Activated CD4-positive, alpha-beta T cell treated with anti-CD3 and anti-CD28 coated beads for 36 hours (primary cell): ENCODE measurements at regions of chr11 and their contacts with region 1.

Region 1: GRCh38 chr11:57335343-57336110 is at the start of gene SSRP1:
- DNase-seq: peak; percentile 93
- ATAC-seq: peak; percentile 99
- H3K4me3 Mint-ChIP-seq: peak within 1 kb of the TSS; percentile 97
- H3K27ac Mint-ChIP-seq: peak within 1 kb of the TSS; percentile 100
- H3K4me1 Mint-ChIP-seq: peaks cover 43% of the 10 kb centered on the region
- H3K27me3 Mint-ChIP-seq: no peaks in the 10 kb centered on the region
- total RNA-seq, gene SSRP1: 279 to 296 TPM

Region 2: DNA sequence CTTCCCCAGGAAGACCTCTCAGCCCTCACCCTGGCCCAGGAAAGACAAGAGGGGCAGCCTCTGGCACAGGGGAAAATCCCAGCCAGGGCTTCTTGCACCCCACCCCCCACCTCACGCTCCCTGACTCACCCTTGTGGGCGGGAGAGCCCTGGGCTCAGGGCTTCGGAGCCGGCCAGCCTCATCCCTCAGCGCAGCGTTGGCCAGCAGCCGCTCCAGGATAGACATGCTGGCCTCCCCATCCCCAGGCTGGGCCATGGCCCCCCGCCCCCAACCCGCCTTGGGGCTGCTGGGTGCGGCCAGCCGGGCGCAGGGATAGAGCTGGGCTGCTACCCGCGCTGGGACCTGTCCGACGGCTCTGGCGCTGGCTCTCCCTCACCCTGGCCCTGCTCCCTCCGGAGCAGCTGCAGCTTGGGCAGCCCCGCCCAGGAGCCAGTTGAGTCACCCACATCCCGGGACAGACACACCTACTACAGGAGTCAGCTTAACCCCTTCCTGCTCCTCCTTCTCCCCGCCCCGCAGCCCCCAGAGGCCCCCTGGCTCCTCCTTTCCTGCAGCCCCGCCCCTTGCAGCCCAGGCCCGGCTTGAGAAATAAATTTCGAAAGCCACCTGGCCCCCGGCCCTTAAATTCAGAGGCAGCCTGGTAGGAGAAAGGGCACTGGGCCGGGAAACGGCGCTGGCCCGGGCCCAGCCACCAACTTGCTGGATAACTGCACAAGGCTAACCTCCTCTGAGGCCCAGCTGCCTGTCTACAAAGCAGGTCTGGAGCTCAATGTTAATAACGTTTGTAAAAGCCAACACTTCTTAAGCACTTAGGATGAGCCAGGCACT is 24.2 kb before region 1 on chr11:
- CTCF ChIA-PET with region 1: no interaction called
- POLR2A ChIA-PET with region 1: no interaction called
- intact Hi-C with region 1: loop called in 1 of 2 experiments (anchors 1 kb)
- DNase-seq: peak; percentile 89
- ATAC-seq: peak; percentile 99
- H3K4me3 Mint-ChIP-seq: peak overlapping the region; percentile 4
- H3K27ac Mint-ChIP-seq: no peak overlapping the region
- H3K4me1 Mint-ChIP-seq: peaks cover 7% of the 10 kb centered on the region
- H3K27me3 Mint-ChIP-seq: no peaks in the 10 kb centered on the region

Region 3: GRCh38 chr11:57324886-57325734 is 10.4 kb before region 1 on chr11 and contains the start of gene TNKS1BP1:
- CTCF ChIA-PET with region 1: interaction called, 8 read pairs
- POLR2A ChIA-PET with region 1: interaction called, 13 read pairs
- intact Hi-C with region 1: loop called (anchors 1 kb)
- DNase-seq: peak; percentile 94
- ATAC-seq: peak; percentile 88
- H3K4me3 Mint-ChIP-seq: peak within 1 kb of the TSS; percentile 82
- H3K27ac Mint-ChIP-seq: peak within 1 kb of the TSS; percentile 98
- H3K4me1 Mint-ChIP-seq: peaks cover 58% of the 10 kb centered on the region
- H3K27me3 Mint-ChIP-seq: no peaks in the 10 kb centered on the region
- total RNA-seq, gene TNKS1BP1: 19.1 to 21.6 TPM

Region 4: GRCh38 chr11:57712256-57713150 is 377.0 kb after region 1 on chr11 and contains the start of gene TMX2:
- CTCF ChIA-PET with region 1: no interaction called
- POLR2A ChIA-PET with region 1: interaction called, 3 read pairs
- intact Hi-C with region 1: loop called in 1 of 2 experiments (anchors 1 kb)
- DNase-seq: peak; percentile 94
- ATAC-seq: peak; percentile 93
- H3K4me3 Mint-ChIP-seq: peak within 1 kb of the TSS; percentile 97
- H3K27ac Mint-ChIP-seq: peak within 1 kb of the TSS; percentile 97
- H3K4me1 Mint-ChIP-seq: peaks cover 50% of the 10 kb centered on the region
- H3K27me3 Mint-ChIP-seq: no peaks in the 10 kb centered on the region
- total RNA-seq, gene TMX2: 59.8 to 72.5 TPM